ENCODE measurements at regions of chr1 and their contacts with region 1.

Region 1: GRCh38 chr1:40612345-40612831 is 53.1 kb downstream of the RIMS3 start:
- DNase-seq: peak; percentile 52
- ATAC-seq: peak; percentile 97
- H3K4me3 ChIP-seq: no peak overlapping the region
- H3K27ac ChIP-seq: no peak overlapping the region
- H3K4me1 ChIP-seq: no peaks in the 10 kb centered on the region
- H3K27me3 ChIP-seq: peaks cover 4% of the 10 kb centered on the region; the same call in 1 of the 2 replicates
- CTCF ChIP-seq: peak; percentile 84
- POLR2A ChIP-seq: no peak
- RAD21 ChIP-seq: peak; percentile 87

Region 2: DNA sequence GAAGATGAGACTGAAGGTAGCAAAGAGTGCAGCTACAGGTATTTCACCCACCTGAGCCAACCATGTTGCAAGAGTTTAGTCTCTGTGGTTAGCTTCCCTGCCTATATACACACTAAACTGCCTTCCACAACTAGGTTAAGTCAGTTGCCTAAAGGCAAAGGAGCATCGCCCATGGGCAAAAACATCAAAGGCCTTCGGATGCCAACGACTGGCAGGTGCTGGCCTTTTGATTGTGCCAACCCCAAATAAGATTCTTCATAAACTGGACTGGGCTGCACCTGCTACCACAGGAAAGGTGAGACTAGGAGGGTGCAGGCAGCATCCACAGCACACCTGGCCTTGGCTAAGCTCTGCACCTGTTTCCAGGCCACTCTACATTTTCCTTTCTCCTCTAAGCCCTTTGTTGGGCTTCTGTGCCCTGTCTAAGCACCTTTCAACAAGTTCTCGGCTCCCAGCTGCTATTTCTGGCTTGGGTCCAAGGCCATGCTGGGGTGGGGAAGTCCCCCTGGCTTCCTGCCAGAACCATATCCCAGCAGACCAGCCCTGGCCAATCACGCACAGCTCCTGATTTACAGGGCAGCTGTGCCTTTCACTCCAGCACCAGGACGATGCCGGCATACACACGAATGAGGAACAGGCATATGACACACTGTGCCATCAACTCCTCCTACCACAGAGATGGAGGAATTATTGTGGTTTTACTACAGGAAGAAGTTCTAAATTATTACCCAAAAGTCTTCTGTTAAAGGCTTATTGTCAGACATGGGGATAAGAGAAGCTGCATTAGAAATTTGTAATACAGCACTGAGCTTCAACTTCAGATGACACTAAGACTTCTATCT is 766.9 kb before region 1 on chr1:
- CTCF ChIA-PET with region 1: no interaction called
- POLR2A ChIA-PET with region 1: no interaction called
- dilution Hi-C with region 1: no loop called
- in situ Hi-C with region 1: no loop called
- intact Hi-C with region 1: no loop called
- DNase-seq: peak; percentile 89
- ATAC-seq: peak; percentile 82
- H3K4me3 ChIP-seq: no peak overlapping the region
- H3K27ac ChIP-seq: peak overlapping the region; percentile 40; the same call in 1 of the 2 replicates
- H3K4me1 ChIP-seq: peaks cover 15% of the 10 kb centered on the region
- H3K27me3 ChIP-seq: no peaks in the 10 kb centered on the region
- CTCF ChIP-seq: no peak
- POLR2A ChIP-seq: no peak
- RAD21 ChIP-seq: no peak

Region 3: DNA sequence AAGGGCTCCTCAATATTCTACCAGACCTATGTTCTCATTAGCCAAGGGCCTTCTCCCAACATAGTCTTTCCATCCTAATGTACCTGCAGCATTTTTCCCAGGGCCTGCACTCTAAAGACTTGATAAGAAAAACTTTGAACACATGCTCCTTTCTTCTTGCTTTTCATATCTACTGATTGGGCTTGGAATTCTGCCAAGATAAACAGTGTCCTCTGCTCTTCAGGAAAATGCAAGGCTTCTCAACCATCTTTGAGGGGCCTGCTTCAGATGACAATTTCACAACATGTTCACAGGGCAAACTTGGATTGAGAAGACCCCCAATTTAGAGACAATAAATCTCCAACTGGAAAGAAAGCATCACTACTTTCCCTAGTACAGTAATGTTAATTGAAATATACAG is 489.5 kb before region 1 on chr1:
- CTCF ChIA-PET with region 1: no interaction called
- POLR2A ChIA-PET with region 1: no interaction called
- dilution Hi-C with region 1: no loop called
- in situ Hi-C with region 1: no loop called
- intact Hi-C with region 1: no loop called
- DNase-seq: no peak
- ATAC-seq: no peak
- H3K4me3 ChIP-seq: no peak overlapping the region
- H3K27ac ChIP-seq: no peak overlapping the region
- H3K4me1 ChIP-seq: no peaks in the 10 kb centered on the region
- H3K27me3 ChIP-seq: peaks cover 31% of the 10 kb centered on the region
- CTCF ChIP-seq: no peak
- POLR2A ChIP-seq: no peak
- RAD21 ChIP-seq: no peak

Region 4: DNA sequence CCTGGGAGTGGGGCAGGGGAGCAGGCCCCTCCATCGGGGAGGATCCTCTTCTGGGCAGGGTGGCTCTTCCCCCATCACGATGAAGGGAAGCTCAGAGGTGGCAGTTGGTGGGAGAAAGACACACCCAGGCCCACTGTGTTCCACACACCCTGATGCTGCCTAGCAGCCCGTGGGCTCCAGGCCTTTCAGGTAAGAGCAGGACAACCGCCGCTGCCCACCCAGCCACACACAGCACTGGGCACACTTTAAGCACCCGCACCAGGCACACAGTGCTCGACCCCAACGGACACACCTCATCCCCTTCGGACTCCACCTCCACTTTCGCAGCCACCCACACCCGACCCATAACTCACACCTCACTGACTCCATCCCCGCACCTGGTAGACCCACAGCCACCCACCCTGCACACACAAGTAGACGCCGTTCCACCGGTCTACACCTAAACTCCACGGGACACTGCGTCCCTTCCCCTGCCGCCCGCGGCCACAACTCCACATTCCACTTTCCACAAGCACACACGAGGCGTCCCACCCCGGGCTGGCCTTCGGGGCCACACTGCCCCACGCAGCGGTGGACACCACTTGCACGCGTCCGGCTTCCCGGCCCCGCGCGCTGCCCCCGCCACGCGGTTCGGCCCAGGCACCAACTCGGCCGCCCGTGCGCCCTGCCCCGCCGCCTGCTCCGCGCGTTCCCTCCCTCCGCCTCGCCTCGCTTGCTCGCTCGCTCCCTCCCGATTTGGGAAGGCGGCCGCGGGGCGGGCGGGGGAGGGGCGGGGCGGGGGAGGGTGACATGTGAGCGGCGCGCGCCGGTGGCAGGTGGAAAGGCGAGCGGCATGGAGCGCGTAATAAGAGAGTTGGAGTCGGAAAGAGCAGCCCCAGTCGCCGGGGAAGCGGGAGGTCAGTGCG is 170.9 kb after region 1 on chr1 and contains the start of gene KCNQ4:
- CTCF ChIA-PET with region 1: no interaction called
- POLR2A ChIA-PET with region 1: no interaction called
- dilution Hi-C with region 1: no loop called
- in situ Hi-C with region 1: no loop called
- intact Hi-C with region 1: loop called (anchors 10 kb)
- DNase-seq: no peak
- ATAC-seq: peak; percentile 64
- H3K4me3 ChIP-seq: peak within 1 kb of the TSS; percentile 25
- H3K27ac ChIP-seq: no peak within 1 kb of the TSS
- H3K4me1 ChIP-seq: no peaks in the 10 kb centered on the region; the same call in 1 of the 2 replicates
- H3K27me3 ChIP-seq: peaks cover 30% of the 10 kb centered on the region
- CTCF ChIP-seq: no peak
- POLR2A ChIP-seq: no peak
- RAD21 ChIP-seq: no peak
- total RNA-seq, gene KCNQ4: not detected in 2 replicates

Measured in IMR-90 (cell line).